ENCODE measurements at regions of chr19 and their contacts with region 1.

Region 1: DNA sequence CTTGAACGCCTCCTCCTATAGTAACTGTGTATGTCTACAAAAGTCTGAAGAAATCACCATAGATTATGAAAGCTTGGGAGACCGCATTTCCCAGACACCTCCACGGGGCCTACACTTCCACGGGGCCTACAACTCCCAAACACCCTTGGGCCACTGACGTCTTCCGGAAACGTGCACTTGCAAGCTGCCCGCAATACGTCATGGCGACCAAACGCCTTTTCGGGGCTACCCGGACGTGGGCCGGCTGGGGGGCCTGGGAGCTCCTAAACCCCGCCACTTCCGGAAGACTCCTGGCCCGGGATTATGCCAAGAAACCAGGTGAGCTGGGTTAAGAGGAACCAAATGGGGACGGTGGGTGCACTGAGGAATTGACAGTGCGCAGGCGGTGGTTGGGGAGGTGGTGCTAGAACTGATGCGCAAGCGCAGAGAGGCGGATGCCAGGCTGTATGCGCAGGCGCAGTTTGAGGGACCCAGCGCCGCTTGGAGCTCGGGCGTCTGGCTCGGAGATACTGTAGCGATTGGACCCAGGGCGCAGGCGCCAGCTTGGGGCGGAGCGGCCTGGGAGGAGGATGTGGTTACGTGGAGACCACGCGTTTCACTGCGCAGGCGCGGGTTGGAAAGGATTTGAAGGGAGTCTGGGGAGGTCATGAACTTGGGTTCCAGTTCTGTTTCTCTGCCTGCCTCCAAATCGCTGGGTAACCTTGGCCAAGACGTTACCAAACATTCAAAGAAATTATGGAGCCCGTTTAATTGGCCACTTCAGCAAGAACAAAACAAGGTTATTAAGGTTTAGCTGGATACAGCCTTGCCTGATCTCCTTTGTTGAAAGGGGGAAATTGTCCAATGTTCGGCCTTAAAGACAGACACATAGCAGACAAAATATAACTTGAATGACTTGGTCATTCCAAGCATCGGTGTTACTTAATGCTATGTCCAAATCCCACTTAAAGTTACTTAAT is at the start of gene MRPL54:
- DNase-seq: peak; percentile 99 to 100
- ATAC-seq: peak; percentile 78 to 91 (median 82)
- H3K4me3 ChIP-seq: peak within 1 kb of the TSS; percentile 100
- H3K4me3 Mint-ChIP-seq: peak within 1 kb of the TSS; percentile 96
- H3K27ac ChIP-seq: peak within 1 kb of the TSS; percentile 97
- H3K27ac Mint-ChIP-seq: peak within 1 kb of the TSS; percentile 99 to 100
- H3K4me1 ChIP-seq: peaks cover 41% of the 10 kb centered on the region
- H3K4me1 Mint-ChIP-seq: peaks cover 27 to 34% of the 10 kb centered on the region in 2 donors
- H3K27me3 ChIP-seq: no peaks in the 10 kb centered on the region
- H3K27me3 Mint-ChIP-seq: no peaks in the 10 kb centered on the region
- CTCF ChIP-seq: no peak
- total RNA-seq, gene MRPL54: 54.1 to 60.5 (median 55.5) TPM

Region 2: DNA sequence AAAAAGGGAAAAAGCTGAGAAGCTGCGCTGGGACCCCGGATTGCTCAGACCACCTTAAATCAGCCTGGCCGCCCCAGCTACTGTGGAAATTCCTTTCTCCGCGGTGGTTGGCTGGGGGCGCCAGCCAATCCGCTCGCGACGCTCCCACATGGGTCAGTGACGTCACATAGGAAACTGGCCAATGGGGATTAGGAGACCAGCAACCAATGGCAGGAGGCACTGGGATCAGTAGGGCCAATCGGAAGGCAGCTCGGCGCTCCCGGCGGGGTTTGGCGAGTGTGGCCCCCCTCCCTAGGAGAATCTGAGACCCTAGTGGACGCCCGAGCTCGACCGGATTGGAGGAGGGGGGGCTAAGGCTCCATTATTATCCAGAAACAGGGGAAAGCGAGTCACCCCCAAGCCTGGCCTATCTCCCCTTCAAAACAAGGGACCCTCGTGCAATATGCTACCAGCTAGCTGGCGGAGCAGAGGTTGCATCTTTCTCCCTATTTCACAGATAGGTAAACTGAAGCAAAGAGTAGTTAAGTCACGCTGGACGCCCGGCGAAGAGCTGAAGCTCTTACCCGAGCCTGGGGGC is 727.1 kb before region 1 on chr19:
- intact Hi-C with region 1: loop called (anchors 2 kb)
- DNase-seq: peak; percentile 90 to 99
- ATAC-seq: peak; percentile 87 to 96 (median 92)
- H3K4me3 ChIP-seq: peak overlapping the region; percentile 49
- H3K4me3 Mint-ChIP-seq: peak overlapping the region; percentile 95
- H3K27ac ChIP-seq: peak overlapping the region; percentile 75
- H3K27ac Mint-ChIP-seq: peak overlapping the region; percentile 95
- H3K4me1 ChIP-seq: peaks cover 22% of the 10 kb centered on the region
- H3K4me1 Mint-ChIP-seq: peaks cover 18 to 31% of the 10 kb centered on the region in 2 donors
- H3K27me3 ChIP-seq: no peaks in the 10 kb centered on the region
- H3K27me3 Mint-ChIP-seq: peaks cover 0 to 10% of the 10 kb centered on the region in 2 donors
- CTCF ChIP-seq: no peak

Region 3: DNA sequence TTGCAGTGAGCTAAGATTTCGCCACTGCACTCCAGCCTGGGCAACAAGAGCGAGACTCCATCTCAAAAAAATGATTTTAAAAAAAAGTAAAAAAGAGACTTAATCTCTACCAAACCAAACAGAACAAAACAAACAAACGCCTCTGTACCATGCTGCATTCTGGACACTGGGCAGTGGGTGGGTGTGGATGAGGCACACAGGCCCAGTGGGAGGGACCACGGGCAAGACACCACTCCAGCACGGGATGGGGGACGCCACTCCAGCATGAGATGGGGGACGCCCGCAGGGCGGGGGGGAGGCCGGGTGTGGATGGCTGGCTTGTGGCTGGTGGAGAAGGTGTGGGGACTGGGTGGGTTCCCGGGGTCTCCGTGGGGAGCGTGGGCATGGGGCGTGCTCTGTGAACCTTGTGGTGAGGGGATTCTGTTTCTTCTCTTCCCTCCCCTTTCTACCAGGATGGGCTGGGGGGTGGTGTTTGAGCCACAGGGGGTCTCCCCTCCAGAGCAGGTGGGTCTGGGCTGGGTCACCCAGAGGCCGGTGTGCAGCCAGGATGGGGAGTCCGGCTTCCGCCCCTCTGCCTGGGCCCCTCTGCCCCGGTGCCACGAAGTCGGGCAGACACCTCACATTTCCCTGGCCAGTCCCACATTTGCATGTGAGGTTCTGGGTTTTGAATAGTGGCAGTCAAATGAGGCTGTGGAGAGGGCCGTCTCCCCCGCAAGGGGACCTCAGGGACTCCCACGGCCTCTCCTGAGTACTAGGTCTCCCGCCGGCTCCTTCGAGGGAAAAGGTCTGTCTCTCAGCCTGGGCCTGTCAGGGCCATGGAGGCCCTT is 47.3 kb after region 1 on chr19:
- intact Hi-C with region 1: loop called (anchors 2 kb)
- DNase-seq: no peak
- ATAC-seq: no peak
- H3K4me3 ChIP-seq: no peak overlapping the region
- H3K4me3 Mint-ChIP-seq: no peak overlapping the region
- H3K27ac ChIP-seq: peak overlapping the region; percentile 62
- H3K27ac Mint-ChIP-seq: peak overlapping the region; percentile 65 to 99
- H3K4me1 ChIP-seq: peaks cover 100% of the 10 kb centered on the region
- H3K4me1 Mint-ChIP-seq: peaks cover 52 to 63% of the 10 kb centered on the region in 2 donors
- H3K27me3 ChIP-seq: no peaks in the 10 kb centered on the region
- H3K27me3 Mint-ChIP-seq: no peaks in the 10 kb centered on the region
- CTCF ChIP-seq: no peak

Measured in natural killer cell (primary cell).